Activated CD4-positive, alpha-beta T cell treated with anti-CD3 and anti-CD28 coated beads for 36 hours (primary cell): ENCODE measurements at regions of chr12 and their contacts with region 1.

Region 1: DNA sequence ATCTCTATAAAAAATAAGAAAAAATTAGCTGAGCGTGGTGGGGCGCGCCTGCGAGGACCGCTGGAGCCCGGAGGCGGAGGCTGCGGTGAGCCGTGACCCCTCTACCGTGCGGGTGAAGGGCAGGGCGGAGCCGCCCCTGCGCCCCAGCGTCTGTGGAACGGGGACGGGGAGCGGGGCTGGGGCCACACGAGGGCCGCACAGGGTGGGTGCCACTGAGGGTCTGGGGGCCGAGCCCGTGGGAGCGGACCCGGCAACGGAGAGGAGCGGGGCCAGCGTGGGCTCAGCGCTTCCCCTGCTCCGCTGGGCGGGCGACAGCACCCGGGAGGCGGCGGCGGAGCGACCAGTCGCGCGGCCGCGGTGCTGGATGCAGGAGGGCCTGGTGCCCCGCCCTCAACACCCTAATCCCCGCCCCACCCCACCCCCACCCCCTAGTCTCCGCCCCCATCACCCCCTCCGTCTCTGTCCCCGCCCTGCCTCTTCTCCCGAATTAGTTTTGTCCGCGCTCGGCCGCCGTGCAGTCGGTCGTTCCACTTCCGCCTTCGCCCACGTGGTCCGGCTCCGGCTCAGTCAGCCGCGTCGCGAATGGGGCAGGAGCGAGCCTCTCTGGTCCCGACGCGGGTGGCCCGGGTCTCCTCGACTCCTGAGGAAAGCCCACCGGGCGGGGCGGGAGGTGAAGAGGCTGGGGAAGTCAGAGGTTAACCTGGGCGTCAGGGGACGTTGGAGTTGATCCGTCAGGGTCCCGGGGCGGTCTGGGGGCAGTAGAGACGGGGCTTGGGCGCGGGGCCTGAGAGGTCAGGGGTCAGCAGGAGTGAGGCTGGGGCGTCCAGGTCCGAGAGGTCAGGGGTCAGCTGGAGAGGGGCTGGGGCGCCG is at the start of gene PUS1:
- DNase-seq: peak; percentile 97
- ATAC-seq: peak; percentile 89
- H3K4me3 Mint-ChIP-seq: peak within 1 kb of the TSS; percentile 97
- H3K27ac Mint-ChIP-seq: peak within 1 kb of the TSS; percentile 85
- H3K4me1 Mint-ChIP-seq: peaks cover 25% of the 10 kb centered on the region
- H3K27me3 Mint-ChIP-seq: no peaks in the 10 kb centered on the region
- total RNA-seq, gene PUS1: 37.8 to 56.5 TPM

Region 2: GRCh38 chr12:131684015-131684725 is 244.8 kb before region 1 on chr12:
- CTCF ChIA-PET with region 1: no interaction called
- POLR2A ChIA-PET with region 1: no interaction called
- intact Hi-C with region 1: loop called in 1 of 2 experiments (anchors 1 kb)
- DNase-seq: peak; percentile 25
- ATAC-seq: no peak
- H3K4me3 Mint-ChIP-seq: no peak overlapping the region
- H3K27ac Mint-ChIP-seq: no peak overlapping the region
- H3K4me1 Mint-ChIP-seq: peaks cover 14% of the 10 kb centered on the region
- H3K27me3 Mint-ChIP-seq: peaks cover 5% of the 10 kb centered on the region

Region 3: DNA sequence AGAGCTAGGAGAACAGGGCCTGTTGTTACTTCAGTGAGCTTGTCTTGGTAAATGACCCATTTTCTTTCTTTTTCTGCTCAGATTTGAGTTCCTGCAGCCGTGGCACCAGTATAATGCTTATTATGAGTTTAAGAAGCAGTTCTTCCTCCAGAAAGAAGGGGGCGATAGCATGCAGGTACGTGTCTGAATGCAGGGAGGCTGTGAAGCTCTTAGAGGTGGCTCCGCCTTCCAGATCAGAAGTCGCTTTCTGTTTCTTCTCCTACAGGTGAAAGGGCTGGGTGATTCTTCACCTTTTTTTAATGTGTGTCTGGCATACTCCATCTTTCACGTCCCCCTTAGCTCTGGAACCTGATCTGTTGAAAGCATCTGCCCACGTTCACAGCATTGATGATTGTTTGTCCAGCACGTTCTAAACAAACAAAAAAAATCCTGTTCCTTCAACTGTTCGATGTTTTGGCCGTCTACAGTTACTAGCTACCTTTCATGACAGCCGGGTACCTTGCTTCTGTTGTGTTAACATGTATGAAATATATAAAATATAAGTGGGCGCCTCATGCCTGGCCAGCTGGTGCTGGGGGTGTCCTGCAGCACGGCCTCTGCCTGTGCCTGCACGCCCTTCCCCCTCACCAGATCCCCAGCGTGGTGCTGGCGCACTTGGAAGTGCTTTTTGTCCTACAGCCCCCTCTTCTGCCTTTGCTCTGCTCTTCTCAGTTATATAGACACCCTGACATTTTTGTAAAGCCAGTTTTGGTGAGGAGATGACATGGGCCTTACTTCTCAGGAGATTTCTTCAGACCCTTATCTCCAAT is 173.4 kb before region 1 on chr12:
- CTCF ChIA-PET with region 1: no interaction called
- POLR2A ChIA-PET with region 1: no interaction called
- intact Hi-C with region 1: no loop called
- DNase-seq: peak; percentile 66
- ATAC-seq: peak; percentile 98
- H3K4me3 Mint-ChIP-seq: no peak overlapping the region
- H3K27ac Mint-ChIP-seq: peak overlapping the region; percentile 37
- H3K4me1 Mint-ChIP-seq: peaks cover 2% of the 10 kb centered on the region
- H3K27me3 Mint-ChIP-seq: no peaks in the 10 kb centered on the region

Region 4: DNA sequence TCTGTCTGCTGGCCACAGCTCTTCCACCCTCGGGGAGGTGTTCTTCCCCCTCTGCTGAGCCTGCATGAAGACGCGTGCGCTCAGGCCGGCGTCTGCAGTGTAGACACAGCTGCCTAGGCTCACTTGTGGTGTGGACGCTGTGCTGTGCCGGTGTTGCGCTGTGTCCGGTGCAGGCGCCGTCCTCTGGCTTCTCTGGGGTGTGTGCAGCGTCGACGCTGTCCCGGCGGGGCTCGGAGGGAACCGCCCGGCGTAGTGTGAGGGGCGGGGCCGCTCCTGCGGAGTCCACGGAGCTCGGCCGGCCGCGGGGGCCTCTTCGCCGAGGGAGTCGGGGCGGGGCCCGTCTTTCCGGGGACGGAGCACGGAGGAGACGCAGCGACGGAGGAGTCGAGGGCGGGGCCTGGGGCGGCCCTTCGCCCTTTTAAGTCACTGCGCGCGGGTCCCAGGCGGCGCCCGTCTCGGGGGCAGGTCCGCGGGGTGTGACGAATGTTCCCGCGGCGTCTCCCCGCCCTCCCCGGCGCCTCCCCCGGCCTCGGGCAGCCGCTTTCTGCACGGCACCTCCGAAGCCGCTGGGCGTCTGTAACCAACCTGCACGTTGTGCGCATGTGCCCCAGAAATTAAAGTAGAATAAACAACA is 260.5 kb after region 1 on chr12:
- CTCF ChIA-PET with region 1: no interaction called
- POLR2A ChIA-PET with region 1: no interaction called
- intact Hi-C with region 1: loop called in 1 of 2 experiments (anchors 1 kb)
- DNase-seq: peak; percentile 97
- ATAC-seq: peak; percentile 95
- H3K4me3 Mint-ChIP-seq: peak overlapping the region; percentile 78
- H3K27ac Mint-ChIP-seq: peak overlapping the region; percentile 79
- H3K4me1 Mint-ChIP-seq: peaks cover 28% of the 10 kb centered on the region
- H3K27me3 Mint-ChIP-seq: no peaks in the 10 kb centered on the region